ENCODE measurements at regions of chr4 and their contacts with region 1.

Region 1: GRCh38 chr4:112636688-112637551 is at the starts of genes LARP7 and ZGRF1:
- DNase-seq: peak; percentile 99
- total RNA-seq, gene LARP7: 52.9 TPM
- total RNA-seq, gene ZGRF1: 2.8 TPM

Region 2: DNA sequence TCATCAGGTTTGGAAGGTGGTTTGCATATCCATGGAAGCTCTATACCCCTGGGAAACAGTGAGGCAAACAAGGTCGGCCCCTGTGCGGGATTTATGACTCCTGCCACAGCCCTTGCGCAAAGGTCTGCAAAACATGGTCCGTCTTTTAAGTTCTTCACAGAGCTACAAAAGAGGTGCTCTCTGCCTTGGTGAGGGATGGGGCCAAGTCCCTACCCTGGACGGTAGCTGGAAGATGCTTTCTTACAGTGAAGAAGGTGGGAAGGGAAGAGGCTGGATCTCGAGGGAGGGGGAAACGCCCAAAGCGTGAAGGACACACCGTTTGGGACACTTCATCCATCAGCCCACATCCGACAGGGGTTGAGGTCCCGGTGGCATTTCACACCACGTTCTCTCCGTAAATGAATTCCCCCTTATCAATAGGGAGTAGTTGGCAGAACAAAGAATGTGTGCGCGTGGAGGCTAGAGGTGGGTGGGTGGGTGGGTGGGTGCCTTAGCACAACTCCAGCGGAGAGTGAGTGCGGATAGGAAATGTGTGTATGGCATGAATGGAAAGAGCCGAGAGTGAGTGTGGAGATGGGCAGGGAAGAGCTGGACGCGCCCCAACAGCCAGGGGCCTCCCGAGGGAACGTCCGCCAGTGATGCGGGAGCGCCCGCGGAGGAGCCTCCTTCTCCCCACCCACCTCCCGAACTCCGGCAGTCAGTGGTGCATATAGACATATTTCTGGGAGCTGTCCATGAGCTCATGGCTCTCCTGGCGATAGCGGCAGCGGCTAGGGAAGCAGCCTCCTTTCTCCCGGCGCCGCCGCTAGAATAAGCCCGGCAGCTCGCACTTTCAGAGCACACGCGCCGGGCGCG is 68.3 kb after region 1 on chr4:
- intact Hi-C with region 1: loop called (anchors 5 kb)
- DNase-seq: peak; percentile 80

Region 3: DNA sequence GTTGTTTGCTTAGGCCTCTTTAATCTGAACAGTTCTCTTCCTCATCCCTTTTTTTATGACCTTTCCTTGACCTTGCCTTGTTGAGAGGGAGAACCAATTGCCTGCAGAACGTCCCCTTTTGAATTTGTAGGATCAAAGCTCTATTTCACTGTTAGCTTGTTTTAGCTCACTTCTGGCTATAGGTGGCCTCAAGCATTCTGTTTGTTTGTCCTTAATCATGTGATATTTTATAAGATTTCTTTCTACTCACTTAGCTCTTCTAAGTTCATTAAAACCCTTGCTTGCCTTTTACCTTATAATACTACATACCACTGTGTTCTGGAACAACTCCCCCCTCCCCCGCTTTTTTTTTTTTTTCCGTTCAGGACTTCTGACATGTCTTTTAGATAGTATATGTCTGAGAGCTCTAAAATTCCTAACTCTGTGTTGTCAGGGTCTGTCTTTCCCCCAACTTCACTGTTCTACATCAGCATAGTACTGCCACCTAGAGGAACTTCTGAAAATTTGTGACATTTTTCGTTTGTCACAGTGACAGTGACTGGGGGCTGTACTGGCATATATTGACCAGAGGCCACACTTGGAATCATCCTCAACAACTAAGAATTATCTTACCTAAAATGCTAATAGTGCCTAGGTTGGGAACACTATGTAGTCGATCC is 128.5 kb after region 1 on chr4:
- intact Hi-C with region 1: loop called (anchors 2 kb)
- DNase-seq: no peak

Region 4: DNA sequence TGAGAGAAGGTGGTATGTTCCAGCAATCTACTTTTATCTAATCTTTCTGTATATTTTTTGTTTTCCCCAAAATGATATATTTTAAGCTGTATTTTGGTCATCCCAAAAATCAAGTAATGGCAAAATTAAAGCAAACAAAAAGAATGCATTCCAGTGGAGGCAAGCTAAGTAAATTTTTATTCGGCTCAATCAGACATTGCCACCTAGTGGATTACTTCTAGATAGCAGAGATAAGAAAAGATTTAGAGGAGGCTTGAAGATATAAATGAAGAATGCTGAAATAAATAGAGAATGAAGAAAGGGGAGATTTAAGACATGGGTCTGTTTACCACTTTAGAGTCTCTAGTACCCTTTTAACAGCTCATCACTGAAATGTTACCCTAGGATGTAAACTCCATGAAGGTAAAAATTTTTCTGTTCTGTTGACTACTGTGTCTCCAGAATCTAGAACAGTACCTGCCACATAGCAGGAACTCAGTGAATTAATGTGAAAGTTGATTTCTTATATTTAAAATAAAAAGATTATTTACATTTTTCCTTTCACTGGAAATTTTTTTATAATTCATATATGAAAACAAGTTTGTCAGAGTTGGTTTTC is 301.6 kb after region 1 on chr4:
- intact Hi-C with region 1: loop called (anchors 5 kb)
- DNase-seq: no peak

Region 5: DNA sequence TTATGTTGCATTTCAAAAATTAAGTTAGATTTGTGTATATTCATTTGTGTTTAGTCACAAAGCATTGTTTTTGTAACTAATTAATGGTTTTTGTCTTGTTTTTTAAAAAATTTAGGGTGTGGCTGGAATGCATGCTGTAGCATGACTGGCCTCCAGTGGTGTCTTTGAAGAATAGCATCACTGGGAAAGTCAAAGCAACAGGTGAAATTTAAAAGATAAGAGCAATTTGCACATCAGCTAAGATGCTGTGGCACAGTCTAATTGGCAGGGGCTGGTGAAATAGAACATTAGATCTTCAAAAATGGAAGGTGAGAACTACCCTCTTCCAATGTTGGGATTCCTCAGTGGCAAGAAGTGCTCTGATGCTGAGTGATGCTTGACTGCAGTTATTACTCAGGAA is 457.9 kb after region 1 on chr4:
- intact Hi-C with region 1: loop called (anchors 10 kb)
- DNase-seq: no peak